HepG2 (cell line): ENCODE measurements at regions of chr6 and their contacts with region 1.

Region 1: GRCh38 chr6:125314019-125314581 is 12.3 kb upstream of the HDDC2 start:
- DNase-seq: peak; percentile 53
- ATAC-seq: peak; percentile 94
- H3K4me3 ChIP-seq: no peak overlapping the region
- H3K27ac ChIP-seq: no peak overlapping the region
- H3K4me1 ChIP-seq: peaks cover 6% of the 10 kb centered on the region; the same call in 1 of the 2 replicates
- H3K27me3 ChIP-seq: peaks cover 0 to 16% of the 10 kb centered on the region in 2 experiments; a peak in 1 of 5 replicates
- CTCF ChIP-seq: peak; percentile 87
- EP300 ChIP-seq: no peak
- POLR2A ChIP-seq: no peak
- RAD21 ChIP-seq: peak; percentile 83

Region 2: GRCh38 chr6:124870611-124871459 is 443.3 kb before region 1 on chr6:
- CTCF ChIA-PET with region 1: no interaction called
- POLR2A ChIA-PET with region 1: no interaction called
- in situ Hi-C with region 1: no loop called
- intact Hi-C with region 1: loop called (anchors 5 kb)
- DNase-seq: peak; percentile 14
- ATAC-seq: no peak
- H3K4me3 ChIP-seq: no peak overlapping the region
- H3K27ac ChIP-seq: no peak overlapping the region
- H3K4me1 ChIP-seq: no peaks in the 10 kb centered on the region
- H3K27me3 ChIP-seq: no peaks in the 10 kb centered on the region
- CTCF ChIP-seq: peak; percentile 54
- EP300 ChIP-seq: no peak
- POLR2A ChIP-seq: no peak
- RAD21 ChIP-seq: 0 out of 2 replicates have a peak, but pooled peaks have one; percentile 33

Region 3: GRCh38 chr6:125340991-125341390 is 26.9 kb after region 1 on chr6:
- CTCF ChIA-PET with region 1: no interaction called
- POLR2A ChIA-PET with region 1: no interaction called
- in situ Hi-C with region 1: no loop called
- intact Hi-C with region 1: no loop called
- DNase-seq: no peak
- ATAC-seq: no peak
- H3K4me3 ChIP-seq: no peak overlapping the region
- H3K27ac ChIP-seq: no peak overlapping the region
- H3K4me1 ChIP-seq: no peaks in the 10 kb centered on the region
- H3K27me3 ChIP-seq: peaks cover 2 to 12% of the 10 kb centered on the region in 2 experiments; a peak in 3 of 5 replicates
- CTCF ChIP-seq: no peak
- EP300 ChIP-seq: no peak
- POLR2A ChIP-seq: no peak
- RAD21 ChIP-seq: no peak

Region 4: DNA sequence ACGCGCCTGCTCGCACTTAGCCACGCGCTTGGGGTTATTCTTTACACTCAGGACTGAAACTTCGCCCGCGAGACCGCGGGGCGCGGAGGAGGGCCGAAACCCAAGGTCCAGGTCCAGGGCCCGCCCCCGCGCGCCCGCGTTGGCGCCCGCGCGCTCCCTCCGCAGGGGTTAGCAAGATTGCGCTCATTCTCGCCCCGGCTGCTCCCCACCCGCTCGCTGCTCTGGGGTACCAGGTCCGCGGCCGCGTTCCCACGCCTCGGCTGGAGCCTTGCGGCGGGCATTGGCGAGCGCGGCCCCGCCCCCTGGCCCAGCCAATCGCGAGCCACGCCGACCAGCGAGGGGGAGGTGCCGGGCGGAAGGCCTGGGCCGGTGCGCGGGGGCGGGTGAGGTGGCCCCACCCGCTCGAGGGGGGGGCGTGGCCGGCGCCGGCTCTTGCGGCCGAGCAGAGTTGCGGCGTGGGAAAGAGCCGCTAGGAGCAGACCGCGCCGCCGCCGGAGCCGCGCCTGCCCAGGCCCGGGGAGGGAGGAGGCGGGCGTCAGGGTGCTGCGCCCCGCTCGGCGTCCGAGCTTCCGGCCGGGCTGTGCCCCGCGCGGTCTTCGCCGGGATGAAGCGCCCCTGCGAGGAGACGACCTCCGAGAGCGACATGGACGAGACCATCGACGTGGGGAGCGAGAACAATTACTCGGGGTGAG is 435.2 kb after region 1 on chr6 and contains the start of gene HEY2:
- CTCF ChIA-PET with region 1: interaction called, 27 read pairs
- POLR2A ChIA-PET with region 1: no interaction called
- in situ Hi-C with region 1: loop called (anchors 5 kb)
- intact Hi-C with region 1: loop called (anchors 1 kb)
- DNase-seq: peak; percentile 84
- ATAC-seq: peak; percentile 89
- H3K4me3 ChIP-seq: peak within 1 kb of the TSS; percentile 61 to 86 (median 65)
- H3K27ac ChIP-seq: no peak within 1 kb of the TSS
- H3K4me1 ChIP-seq: peaks cover 46% of the 10 kb centered on the region
- H3K27me3 ChIP-seq: peaks cover 3 to 60% of the 10 kb centered on the region in 2 experiments; a peak in 4 of 5 replicates
- CTCF ChIP-seq: peak; percentile 15; the same call in 1 of the 2 replicates
- EP300 ChIP-seq: peak in 1 of 2 experiments; percentile 12; a peak in 1 of 4 replicates
- POLR2A ChIP-seq: no peak
- RAD21 ChIP-seq: peak; percentile 62; the same call in 1 of the 2 replicates
- total RNA-seq, gene HEY2: 0.04 TPM in 1 of 2 replicates, not detected in the other

Region 5: DNA sequence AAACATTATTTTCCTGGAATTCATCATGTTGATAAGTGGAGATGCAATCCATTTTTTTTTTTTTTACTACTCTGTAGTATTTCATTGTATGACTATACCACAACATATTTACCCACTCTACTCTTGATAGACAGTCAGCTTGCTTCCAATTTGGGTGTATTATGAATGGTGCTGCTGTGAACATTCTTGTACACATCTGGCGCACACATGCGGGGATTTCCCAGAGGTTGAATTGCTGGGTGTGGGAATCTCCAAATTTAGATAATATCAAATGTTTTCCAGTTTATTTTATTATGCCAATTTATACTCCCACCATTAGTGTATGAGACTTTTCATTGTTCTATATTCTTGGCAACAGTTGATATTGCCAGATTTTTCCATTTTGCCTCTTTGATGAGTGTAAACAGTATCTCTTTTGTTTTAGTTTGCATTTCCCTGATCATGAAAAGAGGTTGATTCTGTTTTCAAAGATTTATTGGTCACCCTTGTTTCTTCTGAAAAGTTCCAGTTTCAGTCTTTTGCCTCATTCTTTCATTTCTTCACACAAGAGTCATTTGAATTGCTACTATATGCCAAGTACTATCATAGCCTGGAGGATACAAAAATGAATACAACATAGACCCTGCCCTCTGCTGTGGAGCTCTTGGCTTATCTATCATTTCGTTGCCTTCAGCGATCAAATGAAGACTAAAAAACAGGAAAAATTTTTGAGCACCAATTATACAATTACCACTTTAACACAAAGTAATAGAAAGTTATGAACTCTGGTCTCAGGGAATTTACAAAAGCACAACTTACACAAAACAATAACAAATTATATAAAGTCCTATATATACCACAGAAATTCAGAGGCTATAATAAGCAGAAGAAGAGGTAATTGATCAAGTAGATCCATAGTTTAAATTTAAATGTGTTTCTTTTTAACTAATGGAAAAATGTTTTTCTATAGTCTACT is 459.6 kb after region 1 on chr6:
- CTCF ChIA-PET with region 1: interaction called, 57 read pairs
- POLR2A ChIA-PET with region 1: no interaction called
- in situ Hi-C with region 1: no loop called
- intact Hi-C with region 1: loop called (anchors 1 kb)
- DNase-seq: no peak
- ATAC-seq: no peak
- H3K4me3 ChIP-seq: no peak overlapping the region
- H3K27ac ChIP-seq: no peak overlapping the region
- H3K4me1 ChIP-seq: peaks cover 15% of the 10 kb centered on the region
- H3K27me3 ChIP-seq: 0 out of 5 replicates have a peak, but pooled peaks cover 0 to 1% of the 10 kb centered on the region in 2 experiments
- CTCF ChIP-seq: no peak
- EP300 ChIP-seq: no peak
- POLR2A ChIP-seq: no peak
- RAD21 ChIP-seq: no peak

Region 6: GRCh38 chr6:125974214-125974866 is 660.2 kb after region 1 on chr6:
- CTCF ChIA-PET with region 1: interaction called, 6 read pairs
- POLR2A ChIA-PET with region 1: no interaction called
- in situ Hi-C with region 1: no loop called
- intact Hi-C with region 1: loop called (anchors 2 kb)
- DNase-seq: peak; percentile 56
- ATAC-seq: peak; percentile 69
- H3K4me3 ChIP-seq: no peak overlapping the region
- H3K27ac ChIP-seq: no peak overlapping the region
- H3K4me1 ChIP-seq: no peaks in the 10 kb centered on the region
- H3K27me3 ChIP-seq: no peaks in the 10 kb centered on the region
- CTCF ChIP-seq: peak; percentile 65
- EP300 ChIP-seq: no peak
- POLR2A ChIP-seq: no peak
- RAD21 ChIP-seq: no peak

Region 7: GRCh38 chr6:127120787-127121636 is 1806.9 kb after region 1 on chr6:
- CTCF ChIA-PET with region 1: no interaction called
- POLR2A ChIA-PET with region 1: no interaction called
- in situ Hi-C with region 1: loop called (anchors 25 kb)
- intact Hi-C with region 1: loop called (anchors 5 kb)
- DNase-seq: peak; percentile 63
- ATAC-seq: peak; percentile 86
- H3K4me3 ChIP-seq: no peak overlapping the region
- H3K27ac ChIP-seq: no peak overlapping the region
- H3K4me1 ChIP-seq: no peaks in the 10 kb centered on the region
- H3K27me3 ChIP-seq: peaks cover 14 to 43% of the 10 kb centered on the region in 2 experiments; a peak in 4 of 5 replicates
- CTCF ChIP-seq: peak; percentile 95
- EP300 ChIP-seq: no peak
- POLR2A ChIP-seq: no peak
- RAD21 ChIP-seq: peak; percentile 82